ENCODE measurements at regions of chrX and their contacts with region 1.

Region 1: DNA sequence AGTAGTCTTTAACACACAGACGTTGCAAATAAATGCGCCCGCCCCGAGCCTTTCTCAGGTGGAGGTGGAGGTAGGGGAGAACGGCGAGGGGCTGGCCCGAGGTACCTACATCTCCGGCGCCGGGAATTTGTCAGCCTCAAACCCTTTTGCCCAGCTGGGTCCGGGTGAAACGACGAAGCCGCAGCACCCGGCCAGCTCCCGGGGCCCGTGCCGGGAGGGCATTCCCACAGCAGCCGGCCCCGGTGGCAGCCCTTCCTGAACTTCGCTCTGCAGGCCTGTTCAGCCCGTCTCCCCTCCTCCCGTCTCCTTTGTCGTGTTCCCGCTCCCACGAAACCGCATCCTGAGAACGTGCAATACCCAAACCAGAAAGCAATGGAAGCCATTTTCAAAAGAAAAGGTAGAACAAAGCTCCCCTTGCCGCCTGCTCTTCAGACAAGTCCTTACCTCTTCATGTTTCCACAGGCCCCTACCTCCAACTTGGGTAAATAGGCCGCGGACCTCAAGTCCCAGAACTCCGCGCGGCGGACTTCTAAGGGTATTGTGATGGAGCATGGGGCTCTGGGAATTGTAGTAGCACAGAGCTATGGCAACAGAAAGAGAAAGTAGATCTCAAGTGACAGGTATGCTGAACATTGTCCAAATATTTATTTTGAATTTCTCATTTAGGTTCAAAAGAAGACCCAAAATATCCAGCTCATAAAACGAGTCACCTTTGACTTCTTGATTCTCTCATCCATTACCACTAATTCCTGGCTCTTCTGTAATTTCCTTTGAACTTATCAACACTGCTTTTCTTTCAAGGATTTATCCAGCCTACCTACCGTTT is at the start of gene RBM41:
- DNase-seq: peak; percentile 74
- H3K4me3 ChIP-seq: peak within 1 kb of the TSS; percentile 45 to 58 (median 51)
- H3K27ac ChIP-seq: peak within 1 kb of the TSS; percentile 57
- H3K4me1 ChIP-seq: peaks cover 9% of the 10 kb centered on the region
- H3K27me3 ChIP-seq: no peaks in the 10 kb centered on the region
- CTCF ChIP-seq: no peak
- total RNA-seq, gene RBM41: 21.5 TPM

Region 2: DNA sequence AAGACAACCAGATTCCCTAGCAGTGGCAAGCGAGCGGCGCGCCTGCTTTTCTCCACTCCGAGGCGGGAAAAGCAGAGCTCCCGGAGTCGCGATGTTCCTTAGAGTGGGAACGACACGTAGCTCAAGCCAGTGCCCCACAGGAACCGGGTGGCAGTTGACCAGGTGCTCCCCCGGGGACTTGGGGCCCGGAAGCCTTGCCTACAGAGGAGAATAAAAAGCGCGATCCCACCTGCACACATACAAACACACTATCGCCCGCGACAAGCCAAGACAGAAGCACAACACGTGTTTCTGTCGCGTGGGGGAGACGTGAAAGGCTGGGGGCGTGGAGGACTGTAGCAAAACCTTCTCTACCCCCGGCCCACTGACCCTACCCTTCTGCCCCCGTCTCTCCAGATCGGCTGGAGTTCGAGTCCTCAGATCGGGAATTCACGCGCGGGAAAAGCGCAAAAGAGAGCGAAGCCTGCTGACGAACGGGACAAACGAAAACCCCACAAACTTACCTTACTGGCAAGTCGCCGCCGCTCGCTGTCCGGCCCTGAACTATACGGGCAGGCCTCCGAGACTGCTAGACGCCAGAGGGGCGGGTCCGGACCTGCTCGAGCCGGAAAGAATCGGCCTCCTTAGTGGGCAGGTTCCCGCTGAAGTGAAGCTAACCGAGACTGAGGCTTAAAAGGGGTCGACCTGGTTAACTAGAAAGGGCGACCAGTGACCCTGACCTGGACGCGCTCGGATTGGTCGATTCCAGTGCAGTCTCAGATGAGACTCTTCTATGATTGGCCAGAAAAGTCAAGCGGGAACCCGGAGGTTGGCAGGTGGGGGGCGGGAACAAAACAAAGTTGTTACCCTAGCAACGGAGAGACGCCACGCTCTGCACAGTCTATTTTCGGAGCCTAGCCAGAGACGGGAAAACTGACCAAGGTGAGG is 87.5 kb after region 1 on chrX and contains the starts of genes DNAAF6 and NUP62CL:
- CTCF ChIA-PET with region 1: no interaction called
- dilution Hi-C with region 1: no loop called
- in situ Hi-C with region 1: no loop called
- intact Hi-C with region 1: loop called (anchors 5 kb)
- DNase-seq: peak; percentile 69
- H3K4me3 ChIP-seq: peak within 1 kb of the TSS; percentile 45 to 72 (median 53)
- H3K27ac ChIP-seq: peak within 1 kb of the TSS; percentile 66
- H3K4me1 ChIP-seq: no peaks in the 10 kb centered on the region
- H3K27me3 ChIP-seq: no peaks in the 10 kb centered on the region
- CTCF ChIP-seq: no peak
- total RNA-seq, gene DNAAF6: not detected
- total RNA-seq, gene NUP62CL: 3.8 to 5.5 TPM

Region 3: DNA sequence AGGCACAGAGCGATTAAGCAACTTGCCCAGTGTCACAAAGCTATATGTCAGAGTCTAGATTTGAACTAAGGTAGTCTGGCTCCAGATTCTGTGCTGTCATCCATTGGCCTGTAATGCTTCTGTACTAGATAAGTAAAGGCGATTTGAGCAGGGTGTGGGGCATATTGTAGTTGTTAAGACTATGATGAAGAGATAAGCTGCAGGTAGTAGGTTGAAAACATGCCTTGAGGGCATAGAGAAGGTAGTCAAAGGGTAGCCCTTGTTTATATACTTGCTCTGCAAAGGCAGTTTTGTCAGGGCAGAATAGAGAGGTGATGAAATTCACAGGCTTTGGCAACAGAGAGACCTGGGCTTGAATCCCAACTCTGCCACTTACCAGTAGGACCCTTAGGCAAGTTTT is 320.9 kb after region 1 on chrX:
- CTCF ChIA-PET with region 1: no interaction called
- dilution Hi-C with region 1: no loop called
- in situ Hi-C with region 1: no loop called
- intact Hi-C with region 1: loop called (anchors 10 kb)
- DNase-seq: no peak
- H3K4me3 ChIP-seq: no peak overlapping the region
- H3K27ac ChIP-seq: no peak overlapping the region
- H3K4me1 ChIP-seq: no peaks in the 10 kb centered on the region
- H3K27me3 ChIP-seq: no peaks in the 10 kb centered on the region
- CTCF ChIP-seq: no peak

Measured in mammary epithelial cell (primary cell).